ENCODE measurements at regions of chr7 and their contacts with region 1.

Region 1: GRCh38 chr7:152463709-152464311 is 28.0 kb upstream of the KMT2C start:
- DNase-seq: peak; percentile 100
- ATAC-seq: peak; percentile 94
- H3K4me3 Mint-ChIP-seq: peak overlapping the region; percentile 95
- H3K27ac Mint-ChIP-seq: peak overlapping the region; percentile 38
- H3K4me1 Mint-ChIP-seq: peaks cover 11% of the 10 kb centered on the region
- H3K27me3 Mint-ChIP-seq: no peaks in the 10 kb centered on the region

Region 2: DNA sequence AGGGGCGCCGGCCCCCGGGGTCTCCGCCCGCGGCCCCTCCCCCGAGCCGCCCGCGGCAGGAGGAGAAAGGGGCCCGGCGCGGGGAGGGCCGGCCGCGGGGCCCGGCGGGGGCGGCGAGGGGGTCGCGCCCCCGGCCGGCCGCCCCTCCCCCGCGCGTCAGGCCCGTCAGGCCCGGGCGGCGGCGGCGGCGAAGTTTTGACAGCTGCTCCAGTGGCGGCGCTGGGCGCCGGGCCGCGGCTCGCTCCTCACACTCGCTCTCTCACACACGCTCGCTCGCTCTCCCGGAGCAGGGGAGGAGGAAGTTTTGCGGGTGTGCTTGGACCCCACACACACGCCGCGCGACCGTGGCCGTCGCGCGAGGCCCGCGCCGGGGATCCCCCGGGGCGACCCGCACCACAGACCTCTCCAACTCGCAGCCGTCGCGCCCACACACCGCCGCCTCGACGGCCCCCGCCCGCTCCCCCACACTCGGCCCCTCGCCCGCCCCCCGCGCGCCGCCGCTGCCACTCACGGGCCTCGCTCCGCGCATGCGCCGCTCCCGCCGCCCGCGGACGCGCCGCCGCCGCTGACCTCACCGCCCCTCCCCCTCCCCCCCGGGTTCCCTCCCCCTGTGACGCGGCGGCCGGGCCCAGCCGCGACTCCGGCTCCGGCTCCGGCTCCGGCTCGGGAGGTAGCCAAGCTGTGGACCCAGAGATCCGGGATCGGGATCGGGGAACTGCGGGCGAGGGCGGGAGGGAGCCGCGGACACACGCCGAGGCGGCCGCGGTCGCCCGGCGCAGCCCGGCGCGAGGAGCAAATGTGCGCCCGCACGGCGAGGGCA is 27.5 kb before region 1 on chr7:
- POLR2A ChIA-PET with region 1: interaction called, 24 read pairs
- DNase-seq: peak; percentile 91
- ATAC-seq: peak; percentile 71
- H3K4me3 Mint-ChIP-seq: peak overlapping the region; percentile 80
- H3K27ac Mint-ChIP-seq: peak overlapping the region; percentile 85
- H3K4me1 Mint-ChIP-seq: peaks cover 16% of the 10 kb centered on the region
- H3K27me3 Mint-ChIP-seq: no peaks in the 10 kb centered on the region

Measured in activated naive CD8-positive, alpha-beta T cell treated with anti-CD3 and anti-CD28 coated beads, Interleukin-2, amount 10 ng/mL, durations not matched to agents 7 days and 5 days (primary cell).